MCF 10A (cell line): ENCODE measurements at regions of chr14 and their contacts with region 1.

Region 1: GRCh38 chr14:91996948-91997371 is 42.9 kb downstream of the TRIP11 start:
- DNase-seq: peak; percentile 65
- H3K4me3 Mint-ChIP-seq: no peak overlapping the region
- H3K27ac Mint-ChIP-seq: peak overlapping the region; percentile 82
- H3K4me1 Mint-ChIP-seq: peaks cover 9% of the 10 kb centered on the region
- H3K27me3 Mint-ChIP-seq: no peaks in the 10 kb centered on the region
- CTCF ChIP-seq: peak; percentile 50

Region 2: DNA sequence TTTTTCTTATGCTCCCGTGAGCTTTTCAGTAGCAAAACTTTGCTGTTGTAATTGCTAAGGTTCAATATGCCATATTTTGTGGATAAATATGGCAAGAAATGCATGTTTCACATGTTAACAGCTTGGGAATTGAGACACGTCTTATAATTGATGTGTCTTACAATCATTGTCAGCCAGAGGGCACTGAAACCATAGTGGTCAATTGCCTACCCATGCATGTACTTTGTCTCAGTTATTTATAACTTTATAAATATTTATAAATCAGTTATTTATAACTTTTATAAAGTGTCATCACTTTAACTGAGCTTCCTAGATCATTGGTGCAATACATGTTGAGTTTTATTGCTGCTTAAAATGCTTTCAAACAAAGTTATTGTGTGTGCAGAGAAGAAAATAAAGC is 347.0 kb before region 1 on chr14:
- CTCF ChIA-PET with region 1: interaction called, 10 read pairs
- POLR2A ChIA-PET with region 1: interaction called, 6 read pairs
- intact Hi-C with region 1: loop called (anchors 5 kb)
- DNase-seq: peak; percentile 57
- H3K4me3 Mint-ChIP-seq: no peak overlapping the region
- H3K27ac Mint-ChIP-seq: no peak overlapping the region
- H3K4me1 Mint-ChIP-seq: peaks cover 5% of the 10 kb centered on the region
- H3K27me3 Mint-ChIP-seq: no peaks in the 10 kb centered on the region
- CTCF ChIP-seq: peak; percentile 76

Region 3: DNA sequence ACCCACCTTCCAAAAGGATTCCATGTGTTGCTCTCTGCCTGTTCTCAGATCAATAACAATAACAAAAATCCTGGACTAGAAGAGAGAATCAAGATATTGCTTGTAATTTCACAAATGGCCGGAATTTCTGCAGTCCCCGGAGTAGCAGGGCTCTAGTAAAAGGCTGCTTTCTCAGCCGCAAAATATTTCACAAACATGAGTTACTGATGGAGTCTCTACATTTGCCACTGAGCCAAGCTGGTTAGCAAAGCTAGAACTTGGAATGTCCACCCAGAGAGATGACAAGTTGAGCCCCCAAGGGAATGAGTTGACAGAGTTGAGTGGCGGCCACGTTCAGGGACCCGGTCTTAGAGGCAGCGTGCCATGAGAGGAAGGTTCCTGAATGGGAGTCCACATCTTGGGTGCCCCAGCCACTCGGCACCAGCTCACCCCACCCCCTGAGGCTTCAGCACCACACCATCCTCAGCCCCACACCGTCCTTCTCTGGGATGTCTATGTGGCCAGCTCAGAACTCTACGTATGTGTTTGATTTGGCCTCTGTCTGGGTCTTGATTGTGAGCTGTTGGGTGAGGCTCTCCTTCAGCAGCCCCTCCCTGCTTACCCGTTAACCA is 65.4 kb before region 1 on chr14:
- CTCF ChIA-PET with region 1: no interaction called
- POLR2A ChIA-PET with region 1: no interaction called
- intact Hi-C with region 1: no loop called
- DNase-seq: no peak
- H3K4me3 Mint-ChIP-seq: no peak overlapping the region
- H3K27ac Mint-ChIP-seq: no peak overlapping the region
- H3K4me1 Mint-ChIP-seq: peaks cover 12% of the 10 kb centered on the region
- H3K27me3 Mint-ChIP-seq: no peaks in the 10 kb centered on the region
- CTCF ChIP-seq: no peak

Region 4: GRCh38 chr14:91947471-91948184 is 49.3 kb before region 1 on chr14 and contains the start of gene FBLN5:
- CTCF ChIA-PET with region 1: no interaction called
- POLR2A ChIA-PET with region 1: no interaction called
- intact Hi-C with region 1: loop called (anchors 5 kb)
- DNase-seq: peak; percentile 60
- H3K4me3 Mint-ChIP-seq: peak within 1 kb of the TSS; percentile 70
- H3K27ac Mint-ChIP-seq: no peak within 1 kb of the TSS
- H3K4me1 Mint-ChIP-seq: peaks cover 11% of the 10 kb centered on the region
- H3K27me3 Mint-ChIP-seq: no peaks in the 10 kb centered on the region
- CTCF ChIP-seq: no peak
- total RNA-seq, gene FBLN5: 4.3 and 14.8 TPM in 2 replicates

Region 5: GRCh38 chr14:91975763-91976162 is 21.2 kb before region 1 on chr14:
- CTCF ChIA-PET with region 1: interaction called, 12 read pairs
- POLR2A ChIA-PET with region 1: interaction called, 3 read pairs
- intact Hi-C with region 1: no loop called
- DNase-seq: no peak
- H3K4me3 Mint-ChIP-seq: no peak overlapping the region
- H3K27ac Mint-ChIP-seq: no peak overlapping the region
- H3K4me1 Mint-ChIP-seq: peaks cover 10% of the 10 kb centered on the region
- H3K27me3 Mint-ChIP-seq: no peaks in the 10 kb centered on the region
- CTCF ChIP-seq: no peak

Region 6: GRCh38 chr14:91985008-91985407 is 12.0 kb before region 1 on chr14:
- CTCF ChIA-PET with region 1: interaction called, 14 read pairs
- POLR2A ChIA-PET with region 1: interaction called, 9 read pairs
- intact Hi-C with region 1: no loop called
- DNase-seq: no peak
- H3K4me3 Mint-ChIP-seq: no peak overlapping the region
- H3K27ac Mint-ChIP-seq: peak overlapping the region; percentile 33
- H3K4me1 Mint-ChIP-seq: peaks cover 27% of the 10 kb centered on the region
- H3K27me3 Mint-ChIP-seq: no peaks in the 10 kb centered on the region
- CTCF ChIP-seq: no peak

Region 7: GRCh38 chr14:92012121-92012748 is 15.3 kb after region 1 on chr14:
- CTCF ChIA-PET with region 1: interaction called, 11 read pairs
- POLR2A ChIA-PET with region 1: no interaction called
- intact Hi-C with region 1: no loop called
- DNase-seq: no peak
- H3K4me3 Mint-ChIP-seq: no peak overlapping the region
- H3K27ac Mint-ChIP-seq: no peak overlapping the region
- H3K4me1 Mint-ChIP-seq: no peaks in the 10 kb centered on the region
- H3K27me3 Mint-ChIP-seq: no peaks in the 10 kb centered on the region
- CTCF ChIP-seq: no peak